ENCODE measurements at regions of chr22 and their contacts with region 1.

Region 1: DNA sequence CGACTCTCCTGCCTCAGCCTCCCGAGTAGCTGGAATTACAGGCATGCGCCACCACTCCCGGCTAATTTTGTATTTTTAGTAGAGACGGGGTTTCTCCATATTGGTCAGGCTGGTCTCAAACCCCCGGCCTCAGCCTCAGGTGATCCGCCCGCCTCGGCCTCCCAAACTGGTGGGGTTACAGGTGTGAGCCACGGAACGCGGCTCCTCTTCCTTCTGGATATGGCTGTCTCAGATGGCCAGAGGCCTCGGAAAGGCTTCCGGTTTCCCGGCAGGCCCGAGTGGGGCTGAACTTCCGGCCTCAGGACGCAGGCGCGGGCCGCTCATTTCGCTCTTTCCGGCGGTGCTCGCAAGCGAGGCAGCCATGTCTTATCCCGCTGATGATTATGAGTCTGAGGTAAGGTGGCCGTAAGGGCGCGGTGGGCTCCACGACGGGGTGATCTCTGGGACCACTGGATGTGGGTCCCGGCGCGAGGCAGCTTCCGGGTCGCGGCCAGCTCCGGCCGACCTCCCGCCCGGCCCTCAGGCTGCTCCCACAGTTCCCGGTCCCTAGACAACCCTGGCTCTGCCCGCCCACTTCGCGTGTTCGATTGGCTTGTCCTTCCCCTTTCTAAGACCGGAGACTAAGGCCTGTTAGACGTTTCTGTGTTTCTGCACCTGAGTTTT is at the start of gene EIF3L:
- DNase-seq: peak; percentile 86
- ATAC-seq: peak; percentile 76
- H3K4me3 Mint-ChIP-seq: peak within 1 kb of the TSS; percentile 92
- H3K27ac Mint-ChIP-seq: peak within 1 kb of the TSS; percentile 99
- H3K4me1 Mint-ChIP-seq: peaks cover 39% of the 10 kb centered on the region
- H3K27me3 Mint-ChIP-seq: no peaks in the 10 kb centered on the region
- CTCF ChIP-seq: no peak
- total RNA-seq, gene EIF3L: 712 and 718 TPM in 2 replicates

Region 2: DNA sequence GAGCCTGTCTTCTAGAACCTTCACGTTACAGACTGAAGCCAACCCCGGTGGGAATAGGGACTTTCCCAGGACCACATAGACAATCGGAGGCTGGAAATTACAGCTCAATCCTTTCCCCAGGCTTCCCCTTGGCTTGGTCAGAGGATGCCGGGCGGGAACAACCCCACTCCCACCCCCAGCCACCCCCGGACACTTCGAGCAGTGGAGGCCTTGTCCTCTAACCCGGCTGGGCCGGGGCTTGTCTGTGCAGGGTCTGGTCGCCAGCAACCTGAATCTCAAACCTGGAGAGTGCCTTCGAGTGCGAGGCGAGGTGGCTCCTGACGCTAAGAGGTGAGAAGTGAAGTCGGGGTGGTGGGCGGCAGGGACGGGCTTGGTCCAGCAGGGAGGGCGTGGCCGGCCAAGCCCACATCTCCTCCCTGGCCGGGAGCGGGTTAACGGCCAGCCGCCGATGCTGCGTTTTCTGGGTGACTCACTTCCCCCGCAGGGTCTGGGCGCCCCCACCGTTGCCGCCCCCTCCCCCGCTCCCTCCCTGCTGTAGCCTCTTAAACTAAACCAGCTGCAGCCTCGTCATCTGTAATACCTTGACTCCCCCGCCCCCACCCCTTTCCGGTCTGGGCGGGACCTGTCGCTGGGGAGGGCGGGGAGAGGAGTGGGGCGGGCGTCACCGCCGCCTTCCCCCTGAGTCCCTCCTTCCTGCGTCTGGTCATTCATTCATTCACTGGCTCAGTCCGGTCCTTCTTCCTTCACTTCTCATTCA is 172.3 kb before region 1 on chr22:
- CTCF ChIA-PET with region 1: no interaction called
- POLR2A ChIA-PET with region 1: interaction called, 5 read pairs
- intact Hi-C with region 1: loop called (anchors 2 kb)
- DNase-seq: peak; percentile 86
- ATAC-seq: peak; percentile 83
- H3K4me3 Mint-ChIP-seq: peak overlapping the region; percentile 84
- H3K27ac Mint-ChIP-seq: peak overlapping the region; percentile 91
- H3K4me1 Mint-ChIP-seq: peaks cover 66% of the 10 kb centered on the region
- H3K27me3 Mint-ChIP-seq: no peaks in the 10 kb centered on the region
- CTCF ChIP-seq: no peak

Region 3: DNA sequence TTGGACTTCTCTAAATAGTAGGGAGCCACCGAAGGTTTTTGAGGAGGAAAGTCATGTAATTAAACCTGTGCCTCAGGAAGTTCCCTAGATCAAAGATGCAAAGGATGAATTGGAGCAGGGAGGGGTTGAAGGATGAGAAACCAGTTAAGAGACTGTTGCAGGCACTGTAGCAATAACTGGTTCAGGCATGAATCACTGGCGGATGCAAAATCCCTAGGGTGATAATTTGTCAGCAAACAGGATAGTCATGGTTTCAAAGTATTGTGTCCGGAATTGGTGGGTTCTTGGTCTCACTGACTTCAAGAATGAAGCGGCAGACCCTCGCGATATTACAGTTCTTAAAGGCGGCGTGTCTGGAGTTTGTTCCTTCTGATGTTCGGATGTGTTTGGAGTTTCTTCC is 132.5 kb before region 1 on chr22:
- CTCF ChIA-PET with region 1: no interaction called
- POLR2A ChIA-PET with region 1: no interaction called
- intact Hi-C with region 1: no loop called
- DNase-seq: no peak
- ATAC-seq: no peak
- H3K4me3 Mint-ChIP-seq: no peak overlapping the region
- H3K27ac Mint-ChIP-seq: no peak overlapping the region
- H3K4me1 Mint-ChIP-seq: no peaks in the 10 kb centered on the region
- H3K27me3 Mint-ChIP-seq: no peaks in the 10 kb centered on the region
- CTCF ChIP-seq: no peak

Region 4: GRCh38 chr22:37745548-37746365 is 103.5 kb before region 1 on chr22:
- CTCF ChIA-PET with region 1: no interaction called
- POLR2A ChIA-PET with region 1: interaction called, 3 read pairs
- intact Hi-C with region 1: loop called (anchors 1 kb)
- DNase-seq: peak; percentile 77
- ATAC-seq: peak; percentile 95
- H3K4me3 Mint-ChIP-seq: peak overlapping the region; percentile 90
- H3K27ac Mint-ChIP-seq: peak overlapping the region; percentile 89
- H3K4me1 Mint-ChIP-seq: peaks cover 22% of the 10 kb centered on the region
- H3K27me3 Mint-ChIP-seq: no peaks in the 10 kb centered on the region
- CTCF ChIP-seq: no peak

Region 5: GRCh38 chr22:37768273-37768672 is 80.9 kb before region 1 on chr22:
- CTCF ChIA-PET with region 1: no interaction called
- POLR2A ChIA-PET with region 1: no interaction called
- intact Hi-C with region 1: no loop called
- DNase-seq: no peak
- ATAC-seq: no peak
- H3K4me3 Mint-ChIP-seq: no peak overlapping the region
- H3K27ac Mint-ChIP-seq: no peak overlapping the region
- H3K4me1 Mint-ChIP-seq: no peaks in the 10 kb centered on the region
- H3K27me3 Mint-ChIP-seq: no peaks in the 10 kb centered on the region
- CTCF ChIP-seq: no peak

Region 6: DNA sequence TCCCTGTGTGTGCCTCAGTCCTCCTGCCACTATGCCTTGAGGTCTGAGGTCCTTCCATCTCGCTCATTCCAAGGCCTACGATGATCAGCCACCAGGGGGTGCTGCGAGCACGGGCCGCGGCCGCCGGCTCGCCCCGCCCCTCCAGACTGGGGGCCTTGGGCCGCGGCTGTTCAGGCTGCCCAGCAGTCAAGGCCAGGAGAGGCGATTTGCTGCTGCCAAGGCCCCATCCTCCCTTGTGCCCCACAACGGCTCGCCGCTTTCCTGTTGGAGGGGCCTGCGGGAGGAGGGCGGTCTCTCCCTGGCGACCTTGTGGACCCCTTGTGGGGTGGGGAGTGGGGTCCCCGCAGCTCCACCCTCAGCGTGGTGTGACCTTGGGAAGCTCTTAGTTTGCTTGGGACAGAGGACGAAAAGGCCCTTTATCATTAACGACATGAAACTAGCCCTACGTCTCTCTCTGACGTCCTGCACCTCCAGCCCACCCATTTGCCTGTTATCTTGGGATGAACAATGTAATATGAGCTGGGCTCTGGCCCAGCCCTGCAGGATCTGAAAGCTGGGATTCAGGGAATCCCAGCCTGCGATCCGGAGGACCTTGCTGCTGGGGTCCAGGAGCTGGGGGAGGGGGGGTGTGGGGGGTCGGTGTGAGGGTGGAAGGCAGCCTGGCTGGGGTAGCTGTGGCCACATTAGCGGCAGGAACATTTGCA is 31.4 kb before region 1 on chr22:
- CTCF ChIA-PET with region 1: interaction called, 9 read pairs
- POLR2A ChIA-PET with region 1: interaction called, 4 read pairs
- intact Hi-C with region 1: loop called (anchors 1 kb)
- DNase-seq: peak; percentile 89
- ATAC-seq: peak; percentile 84
- H3K4me3 Mint-ChIP-seq: peak overlapping the region; percentile 52
- H3K27ac Mint-ChIP-seq: no peak overlapping the region
- H3K4me1 Mint-ChIP-seq: peaks cover 23% of the 10 kb centered on the region
- H3K27me3 Mint-ChIP-seq: peaks cover 17% of the 10 kb centered on the region
- CTCF ChIP-seq: peak; percentile 32

Region 7: DNA sequence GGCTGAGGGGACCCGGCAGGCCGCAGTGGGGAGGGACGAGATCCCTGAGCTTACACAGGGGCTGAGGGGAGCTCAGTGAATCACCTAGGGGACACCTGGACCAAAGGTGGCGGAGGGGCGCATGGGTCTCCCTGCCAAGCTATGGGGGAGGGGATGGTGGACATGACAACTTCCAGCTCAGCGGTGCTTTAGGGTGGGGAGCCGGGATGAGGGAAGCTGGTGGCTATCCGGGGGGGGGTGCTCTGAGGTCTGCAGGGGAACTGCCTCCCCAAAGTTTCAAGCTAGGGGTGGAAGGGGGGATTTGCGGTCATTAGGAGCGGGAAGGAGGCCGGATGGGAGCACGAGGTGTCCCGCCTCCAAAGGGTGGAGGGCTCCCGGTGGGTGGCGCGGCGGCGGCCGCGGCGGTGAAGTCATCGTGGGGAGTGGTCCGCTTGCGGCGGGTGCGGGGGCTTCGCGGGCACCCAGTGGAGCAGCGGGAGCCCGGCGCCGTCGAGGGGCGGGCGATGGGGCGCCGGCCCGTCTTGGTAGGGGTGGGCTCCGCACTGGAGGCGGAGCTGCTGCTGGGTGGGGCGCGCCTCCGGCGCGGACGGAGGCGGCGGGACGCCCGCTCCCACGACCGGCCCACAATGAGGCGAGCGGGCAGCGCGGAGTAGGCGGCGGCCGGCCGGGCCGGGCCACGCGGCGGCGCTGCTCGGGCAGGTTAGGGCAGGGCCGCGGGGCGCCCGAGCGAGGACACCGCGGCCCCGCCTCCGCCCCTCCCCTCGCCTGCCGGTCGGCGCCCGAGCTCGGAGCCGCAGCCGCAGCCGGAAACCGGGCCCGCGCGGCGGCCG is 56.5 kb after region 1 on chr22 and contains the start of gene MICALL1:
- CTCF ChIA-PET with region 1: no interaction called
- POLR2A ChIA-PET with region 1: interaction called, 6 read pairs
- intact Hi-C with region 1: loop called (anchors 1 kb)
- DNase-seq: peak; percentile 81
- ATAC-seq: peak; percentile 90
- H3K4me3 Mint-ChIP-seq: peak within 1 kb of the TSS; percentile 81
- H3K27ac Mint-ChIP-seq: peak within 1 kb of the TSS; percentile 85
- H3K4me1 Mint-ChIP-seq: peaks cover 22% of the 10 kb centered on the region
- H3K27me3 Mint-ChIP-seq: no peaks in the 10 kb centered on the region
- CTCF ChIP-seq: no peak
- total RNA-seq, gene MICALL1: 20.8 and 27.6 TPM in 2 replicates